SK-N-SH (cell line): ENCODE measurements at regions of chr1 and their contacts with region 1.

Region 1: GRCh38 chr1:166479052-166479631 is 312.3 kb upstream of the FAM78B start:
- DNase-seq: peak; percentile 31
- H3K4me3 ChIP-seq: no peak overlapping the region
- H3K27ac ChIP-seq: no peak overlapping the region
- H3K4me1 ChIP-seq: no peaks in the 10 kb centered on the region
- H3K27me3 ChIP-seq: no peaks in the 10 kb centered on the region
- CTCF ChIP-seq: peak; percentile 90
- EP300 ChIP-seq: no peak
- RAD21 ChIP-seq: peak; percentile 68

Region 2: GRCh38 chr1:165928075-165928731 is 550.9 kb before region 1 on chr1:
- CTCF ChIA-PET with region 1: interaction called, 88 read pairs
- POLR2A ChIA-PET with region 1: no interaction called
- DNase-seq: peak; percentile 62
- H3K4me3 ChIP-seq: peak overlapping the region in 1 of 2 experiments; percentile 14; a peak in 1 of 4 replicates
- H3K27ac ChIP-seq: no peak overlapping the region
- H3K4me1 ChIP-seq: no peaks in the 10 kb centered on the region
- H3K27me3 ChIP-seq: no peaks in the 10 kb centered on the region
- CTCF ChIP-seq: peak; percentile 79
- EP300 ChIP-seq: no peak
- RAD21 ChIP-seq: peak; percentile 82

Region 3: DNA sequence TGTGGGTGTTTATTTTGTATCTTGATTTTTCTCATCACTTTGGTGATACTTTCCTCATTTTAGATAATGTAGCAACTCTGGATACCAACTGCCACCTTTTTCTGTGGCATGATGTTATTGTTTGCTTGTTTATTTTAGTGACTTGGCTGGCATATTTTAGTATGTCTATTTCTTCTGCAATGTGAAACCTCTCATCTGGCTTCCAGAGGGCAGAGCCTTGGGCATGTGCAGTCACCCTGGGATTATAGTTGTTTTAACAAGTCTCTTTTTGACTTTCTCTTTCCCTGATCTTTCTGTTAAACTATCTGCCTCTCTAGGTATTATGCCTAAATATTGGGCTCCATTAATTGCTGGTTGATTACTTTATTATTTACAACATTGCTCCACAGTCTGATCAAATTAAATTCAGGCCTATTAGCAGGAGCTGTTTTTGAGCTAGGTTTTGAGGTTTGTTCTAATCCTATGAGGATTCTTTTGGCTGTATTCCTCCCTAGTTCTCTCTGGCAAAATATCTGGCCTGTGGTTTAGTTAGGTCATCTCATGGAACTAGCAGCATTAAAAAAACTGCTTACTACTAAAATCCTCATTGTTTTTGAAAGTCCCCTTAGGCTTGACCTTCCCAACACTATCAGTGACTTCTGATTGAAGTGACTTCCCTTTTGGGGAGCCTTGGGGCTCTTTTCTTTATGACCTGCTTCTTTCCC is 225.9 kb before region 1 on chr1:
- CTCF ChIA-PET with region 1: no interaction called
- POLR2A ChIA-PET with region 1: no interaction called
- DNase-seq: no peak
- H3K4me3 ChIP-seq: no peak overlapping the region
- H3K27ac ChIP-seq: no peak overlapping the region
- H3K4me1 ChIP-seq: no peaks in the 10 kb centered on the region
- H3K27me3 ChIP-seq: no peaks in the 10 kb centered on the region
- CTCF ChIP-seq: no peak
- EP300 ChIP-seq: no peak
- RAD21 ChIP-seq: no peak

Region 4: DNA sequence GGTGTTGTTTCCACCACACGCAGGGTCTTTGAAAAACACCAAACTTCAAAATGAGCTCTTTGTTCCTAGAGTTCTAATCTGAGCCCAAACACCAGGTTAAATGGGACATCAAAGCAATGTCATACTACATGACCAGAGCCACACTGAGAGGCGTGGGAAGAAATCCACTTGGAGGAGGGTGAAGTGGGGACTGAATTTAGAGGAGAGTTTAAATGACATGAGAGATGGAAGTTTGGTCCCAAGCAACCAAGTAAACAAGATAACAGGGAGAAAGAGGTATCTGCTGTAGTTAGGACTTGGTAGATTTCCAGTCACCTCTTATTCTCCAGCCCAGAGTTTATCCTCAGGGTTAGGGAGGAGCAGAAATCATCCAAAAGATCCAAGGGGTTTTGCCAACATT is 21.4 kb before region 1 on chr1:
- CTCF ChIA-PET with region 1: interaction called, 10 read pairs
- POLR2A ChIA-PET with region 1: no interaction called
- DNase-seq: no peak
- H3K4me3 ChIP-seq: no peak overlapping the region
- H3K27ac ChIP-seq: no peak overlapping the region
- H3K4me1 ChIP-seq: no peaks in the 10 kb centered on the region
- H3K27me3 ChIP-seq: no peaks in the 10 kb centered on the region
- CTCF ChIP-seq: no peak
- EP300 ChIP-seq: no peak
- RAD21 ChIP-seq: no peak

Region 5: GRCh38 chr1:166464333-166464732 is 14.8 kb before region 1 on chr1:
- CTCF ChIA-PET with region 1: interaction called, 24 read pairs
- POLR2A ChIA-PET with region 1: no interaction called
- DNase-seq: no peak
- H3K4me3 ChIP-seq: no peak overlapping the region
- H3K27ac ChIP-seq: no peak overlapping the region
- H3K4me1 ChIP-seq: no peaks in the 10 kb centered on the region
- H3K27me3 ChIP-seq: no peaks in the 10 kb centered on the region
- CTCF ChIP-seq: no peak
- EP300 ChIP-seq: no peak
- RAD21 ChIP-seq: no peak

Region 6: GRCh38 chr1:166489670-166490436 is 10.7 kb after region 1 on chr1:
- CTCF ChIA-PET with region 1: interaction called, 38 read pairs
- POLR2A ChIA-PET with region 1: no interaction called
- DNase-seq: no peak
- H3K4me3 ChIP-seq: peak overlapping the region; percentile 33 to 59
- H3K27ac ChIP-seq: 0 out of 4 replicates have a peak overlapping the region, but pooled peaks of 1 of the 2 experiments have one; percentile 5
- H3K4me1 ChIP-seq: no peaks in the 10 kb centered on the region
- H3K27me3 ChIP-seq: no peaks in the 10 kb centered on the region
- CTCF ChIP-seq: no peak
- EP300 ChIP-seq: no peak
- RAD21 ChIP-seq: no peak

Region 7: GRCh38 chr1:166695115-166695514 is 216.0 kb after region 1 on chr1:
- CTCF ChIA-PET with region 1: no interaction called
- POLR2A ChIA-PET with region 1: no interaction called
- DNase-seq: no peak
- H3K4me3 ChIP-seq: no peak overlapping the region
- H3K27ac ChIP-seq: no peak overlapping the region
- H3K4me1 ChIP-seq: no peaks in the 10 kb centered on the region
- H3K27me3 ChIP-seq: no peaks in the 10 kb centered on the region
- CTCF ChIP-seq: no peak
- EP300 ChIP-seq: no peak
- RAD21 ChIP-seq: no peak